ENCODE measurements at regions of chr11 and their contacts with region 1.

Region 1: DNA sequence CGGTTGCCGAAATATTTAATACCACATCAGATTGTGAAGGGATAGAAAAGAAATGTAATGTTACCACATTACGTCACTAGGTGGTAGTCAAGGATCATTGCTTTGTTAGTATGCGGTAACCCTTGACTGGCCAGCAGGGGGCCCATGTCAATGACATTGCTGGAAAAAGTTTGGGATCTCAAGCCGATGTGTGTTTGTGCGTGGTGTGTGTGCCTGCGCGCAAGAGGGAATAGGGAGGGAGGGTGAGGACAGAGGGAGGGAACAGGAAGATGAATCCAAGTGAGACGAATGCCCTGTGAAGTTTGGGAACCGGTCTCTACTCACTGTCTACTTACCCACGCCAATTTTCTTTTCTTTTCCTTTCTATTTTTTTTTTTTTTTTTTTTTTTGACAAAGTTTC is 10.7 kb upstream of the MRGPRX2 start:
- DNase-seq: peak; percentile 68 to 89 (median 80)
- H3K4me3 ChIP-seq: no peak overlapping the region
- H3K27ac ChIP-seq: no peak overlapping the region
- H3K4me1 ChIP-seq: no peaks in the 10 kb centered on the region
- H3K27me3 ChIP-seq: no peaks in the 10 kb centered on the region
- CTCF ChIP-seq: peak; percentile 70 to 100 (median 94)
- POLR2A ChIP-seq: no peak

Region 2: DNA sequence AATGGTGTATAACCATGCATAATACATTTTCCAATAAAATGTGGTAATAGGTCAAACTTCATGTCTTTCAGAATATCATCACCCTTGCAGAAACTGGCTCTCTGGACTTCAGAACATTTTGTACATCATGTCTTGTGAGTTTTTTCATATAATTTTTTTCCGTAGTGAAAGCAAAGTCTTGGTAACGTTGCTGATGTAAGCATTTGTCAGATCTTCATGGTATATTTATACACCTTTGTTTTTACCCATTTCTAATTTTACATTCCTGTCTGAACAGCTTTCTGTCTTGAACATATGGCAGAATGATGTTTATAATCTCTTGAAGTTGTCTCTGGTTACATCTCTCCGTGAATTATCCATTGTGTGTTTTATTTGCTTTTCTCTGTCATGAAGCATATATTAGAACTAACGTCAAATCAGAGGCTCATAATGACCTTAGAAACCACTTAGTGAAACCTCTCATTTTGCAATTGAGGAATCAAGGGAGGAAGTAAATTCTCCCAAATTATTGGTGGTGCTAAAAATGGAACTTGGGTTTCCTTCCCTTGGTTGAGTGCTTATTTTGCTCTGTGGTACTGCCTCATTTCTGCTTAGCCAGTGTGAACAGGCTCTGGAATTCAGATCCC is 93.1 kb after region 1 on chr11:
- intact Hi-C with region 1: no loop called
- DNase-seq: no peak
- H3K4me3 ChIP-seq: no peak overlapping the region
- H3K27ac ChIP-seq: no peak overlapping the region
- H3K4me1 ChIP-seq: peaks cover 0 to 4% of the 10 kb centered on the region in 2 donors
- H3K27me3 ChIP-seq: no peaks in the 10 kb centered on the region
- CTCF ChIP-seq: no peak
- POLR2A ChIP-seq: no peak

Region 3: GRCh38 chr11:19240420-19241259 is 169.4 kb after region 1 on chr11 and contains the start of gene E2F8:
- intact Hi-C with region 1: loop called in 1 of 2 experiments (anchors 10 kb)
- DNase-seq: peak; percentile 89 to 96 (median 95)
- H3K4me3 ChIP-seq: peak within 1 kb of the TSS in 2 of 4 donors; percentile 41 to 69
- H3K27ac ChIP-seq: no peak within 1 kb of the TSS
- H3K4me1 ChIP-seq: peaks cover 9 to 24% of the 10 kb centered on the region in 2 donors
- H3K27me3 ChIP-seq: peaks cover 30% of the 10 kb centered on the region
- CTCF ChIP-seq: no peak
- POLR2A ChIP-seq: no peak
- total RNA-seq, gene E2F8: 0.23 to 4.4 (median 0.47) TPM in 8 of 9 donors, not detected in the other

Region 4: GRCh38 chr11:19259487-19260345 is 188.5 kb after region 1 on chr11:
- intact Hi-C with region 1: loop called in 1 of 2 experiments (anchors 10 kb)
- DNase-seq: peak; percentile 51 to 89 (median 77)
- H3K4me3 ChIP-seq: peak overlapping the region in 1 of 4 donors; percentile 42
- H3K27ac ChIP-seq: no peak overlapping the region
- H3K4me1 ChIP-seq: peaks cover 0 to 4% of the 10 kb centered on the region in 2 donors
- H3K27me3 ChIP-seq: no peaks in the 10 kb centered on the region
- CTCF ChIP-seq: peak; percentile 80 to 97 (median 84)
- POLR2A ChIP-seq: no peak